ENCODE measurements at regions of chr7 and their contacts with region 1.

Region 1: GRCh38 chr7:132580717-132581285 is 4.5 kb upstream of the PLXNA4 start:
- DNase-seq: peak; percentile 7
- ATAC-seq: peak; percentile 97
- H3K4me3 ChIP-seq: no peak overlapping the region
- H3K27ac ChIP-seq: no peak overlapping the region
- H3K4me1 ChIP-seq: no peaks in the 10 kb centered on the region
- H3K27me3 ChIP-seq: peaks cover 6 to 9% of the 10 kb centered on the region in 2 experiments
- CTCF ChIP-seq: peak; percentile 71 to 84 (median 71)
- EP300 ChIP-seq: no peak
- POLR2A ChIP-seq: no peak
- RAD21 ChIP-seq: peak; percentile 76

Region 2: GRCh38 chr7:131688738-131689661 is 891.8 kb before region 1 on chr7:
- CTCF ChIA-PET with region 1: interaction called, 23 read pairs
- POLR2A ChIA-PET with region 1: no interaction called
- RAD21 ChIA-PET with region 1: interaction called, 16 read pairs
- SMC1A ChIA-PET with region 1: interaction called, 4 read pairs
- in situ Hi-C with region 1: no loop called
- intact Hi-C with region 1: loop called (anchors 2 kb)
- DNase-seq: no peak
- ATAC-seq: peak; percentile 86
- H3K4me3 ChIP-seq: no peak overlapping the region
- H3K27ac ChIP-seq: no peak overlapping the region
- H3K4me1 ChIP-seq: no peaks in the 10 kb centered on the region
- H3K27me3 ChIP-seq: peaks cover 2 to 3% of the 10 kb centered on the region in 2 experiments; a peak in 2 of 4 replicates
- CTCF ChIP-seq: peak; percentile 94 to 96 (median 95)
- EP300 ChIP-seq: no peak
- POLR2A ChIP-seq: no peak
- RAD21 ChIP-seq: peak; percentile 90

Region 3: DNA sequence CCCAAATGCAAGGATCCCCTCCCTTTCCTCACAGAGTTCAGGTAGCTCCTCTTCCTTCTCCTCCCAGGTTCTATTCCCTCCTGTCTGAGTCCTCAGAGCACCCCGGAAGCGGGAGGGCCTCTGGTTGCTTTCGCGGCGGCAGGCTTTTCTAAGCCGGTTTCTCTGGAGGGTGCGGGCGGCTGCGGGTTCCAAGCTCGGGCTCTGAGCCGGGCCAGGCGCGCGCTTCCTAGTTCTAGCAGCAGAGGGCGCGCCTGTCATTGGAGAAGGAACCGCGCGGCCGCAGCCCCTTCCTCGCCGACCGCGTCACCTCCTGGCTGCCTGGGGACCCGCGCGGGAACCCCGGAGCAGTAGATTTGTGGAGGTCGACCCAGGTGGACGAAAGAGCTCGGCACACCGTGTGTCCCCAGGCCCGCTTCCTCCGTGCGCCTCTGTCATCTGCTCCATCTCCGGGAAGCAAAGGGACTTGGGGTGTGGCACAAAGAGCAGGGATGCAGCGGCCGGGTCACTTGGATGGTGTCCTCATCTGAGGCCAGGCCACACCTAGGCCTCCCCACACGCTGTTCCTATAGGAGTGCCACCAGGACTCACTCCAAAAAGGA is 635.4 kb before region 1 on chr7:
- CTCF ChIA-PET with region 1: interaction called, 11 read pairs
- POLR2A ChIA-PET with region 1: no interaction called
- RAD21 ChIA-PET with region 1: interaction called, 4 read pairs
- SMC1A ChIA-PET with region 1: interaction called, 3 read pairs
- in situ Hi-C with region 1: no loop called
- intact Hi-C with region 1: loop called (anchors 10 kb)
- DNase-seq: no peak
- ATAC-seq: peak; percentile 91
- H3K4me3 ChIP-seq: no peak overlapping the region
- H3K27ac ChIP-seq: no peak overlapping the region
- H3K4me1 ChIP-seq: no peaks in the 10 kb centered on the region; the same call in 1 of the 2 replicates
- H3K27me3 ChIP-seq: peaks cover 1 to 3% of the 10 kb centered on the region in 2 experiments; a peak in 1 of 4 replicates
- CTCF ChIP-seq: peak; percentile 64 to 76 (median 67)
- EP300 ChIP-seq: no peak
- POLR2A ChIP-seq: no peak
- RAD21 ChIP-seq: peak; percentile 76

Region 4: GRCh38 chr7:132318352-132319318 is 262.2 kb before region 1 on chr7:
- CTCF ChIA-PET with region 1: interaction called, 41 read pairs
- POLR2A ChIA-PET with region 1: no interaction called
- RAD21 ChIA-PET with region 1: interaction called, 12 read pairs
- SMC1A ChIA-PET with region 1: interaction called, 7 read pairs
- in situ Hi-C with region 1: no loop called
- intact Hi-C with region 1: loop called (anchors 1 kb)
- DNase-seq: peak; percentile 9
- ATAC-seq: peak; percentile 100
- H3K4me3 ChIP-seq: no peak overlapping the region
- H3K27ac ChIP-seq: no peak overlapping the region
- H3K4me1 ChIP-seq: no peaks in the 10 kb centered on the region
- H3K27me3 ChIP-seq: peaks cover 0 to 4% of the 10 kb centered on the region in 2 experiments; a peak in 3 of 4 replicates
- CTCF ChIP-seq: peak; percentile 79 to 89 (median 88)
- EP300 ChIP-seq: no peak
- POLR2A ChIP-seq: no peak
- RAD21 ChIP-seq: peak; percentile 78

Region 5: GRCh38 chr7:132557489-132558044 is 23.2 kb before region 1 on chr7:
- CTCF ChIA-PET with region 1: interaction called, 10 read pairs
- POLR2A ChIA-PET with region 1: no interaction called
- RAD21 ChIA-PET with region 1: no interaction called
- SMC1A ChIA-PET with region 1: no interaction called
- in situ Hi-C with region 1: no loop called
- intact Hi-C with region 1: no loop called
- DNase-seq: no peak
- ATAC-seq: no peak
- H3K4me3 ChIP-seq: no peak overlapping the region
- H3K27ac ChIP-seq: no peak overlapping the region
- H3K4me1 ChIP-seq: no peaks in the 10 kb centered on the region
- H3K27me3 ChIP-seq: no peaks in the 10 kb centered on the region
- CTCF ChIP-seq: no peak
- EP300 ChIP-seq: no peak
- POLR2A ChIP-seq: no peak
- RAD21 ChIP-seq: no peak

Region 6: DNA sequence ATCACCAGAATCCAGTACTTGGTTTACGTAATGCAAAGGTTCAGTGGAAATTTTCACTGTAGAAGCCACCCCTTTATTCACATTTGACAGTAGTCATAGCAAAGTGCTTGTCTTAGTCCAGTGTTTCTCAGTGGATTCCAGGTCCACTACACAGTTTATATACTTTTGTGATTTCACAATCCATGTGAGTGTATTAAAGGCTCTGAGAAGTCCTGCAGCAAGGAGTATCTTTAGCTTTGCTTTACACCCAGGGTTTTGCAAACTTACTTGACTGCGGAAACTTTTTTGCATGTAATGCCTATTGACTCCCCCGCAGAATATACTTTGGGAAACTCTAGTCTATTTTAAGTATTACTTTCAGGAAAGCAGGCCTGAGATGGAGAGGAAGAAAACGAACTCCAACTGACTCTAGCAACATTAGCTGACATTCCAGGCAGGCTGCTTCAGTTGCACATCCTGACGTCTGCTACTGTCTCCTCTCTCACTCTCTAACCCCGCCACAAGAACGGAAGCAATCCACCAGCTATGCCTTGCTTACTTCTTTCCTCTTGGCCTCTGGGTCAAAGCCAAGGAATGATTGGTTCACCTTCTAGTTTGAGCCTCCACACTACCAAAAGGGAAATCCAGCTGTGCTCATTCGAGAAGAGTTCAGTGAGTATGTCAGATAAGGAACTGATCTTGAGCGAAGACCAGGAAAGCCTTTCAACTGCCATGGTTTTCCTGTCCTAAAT is 10.8 kb before region 1 on chr7:
- CTCF ChIA-PET with region 1: interaction called, 17 read pairs
- POLR2A ChIA-PET with region 1: no interaction called
- RAD21 ChIA-PET with region 1: no interaction called
- SMC1A ChIA-PET with region 1: interaction called, 4 read pairs
- in situ Hi-C with region 1: no loop called
- intact Hi-C with region 1: no loop called
- DNase-seq: no peak
- ATAC-seq: no peak
- H3K4me3 ChIP-seq: no peak overlapping the region
- H3K27ac ChIP-seq: no peak overlapping the region
- H3K4me1 ChIP-seq: no peaks in the 10 kb centered on the region
- H3K27me3 ChIP-seq: peaks cover 12 to 15% of the 10 kb centered on the region in 2 experiments
- CTCF ChIP-seq: no peak
- EP300 ChIP-seq: no peak
- POLR2A ChIP-seq: no peak
- RAD21 ChIP-seq: no peak

Measured in GM12878 (cell line).